Activated CD4-positive, alpha-beta memory T cell treated with anti-CD3 and anti-CD28 coated beads for 36 hours (primary cell): ENCODE measurements at regions of chr5 and their contacts with region 1.

Region 1: DNA sequence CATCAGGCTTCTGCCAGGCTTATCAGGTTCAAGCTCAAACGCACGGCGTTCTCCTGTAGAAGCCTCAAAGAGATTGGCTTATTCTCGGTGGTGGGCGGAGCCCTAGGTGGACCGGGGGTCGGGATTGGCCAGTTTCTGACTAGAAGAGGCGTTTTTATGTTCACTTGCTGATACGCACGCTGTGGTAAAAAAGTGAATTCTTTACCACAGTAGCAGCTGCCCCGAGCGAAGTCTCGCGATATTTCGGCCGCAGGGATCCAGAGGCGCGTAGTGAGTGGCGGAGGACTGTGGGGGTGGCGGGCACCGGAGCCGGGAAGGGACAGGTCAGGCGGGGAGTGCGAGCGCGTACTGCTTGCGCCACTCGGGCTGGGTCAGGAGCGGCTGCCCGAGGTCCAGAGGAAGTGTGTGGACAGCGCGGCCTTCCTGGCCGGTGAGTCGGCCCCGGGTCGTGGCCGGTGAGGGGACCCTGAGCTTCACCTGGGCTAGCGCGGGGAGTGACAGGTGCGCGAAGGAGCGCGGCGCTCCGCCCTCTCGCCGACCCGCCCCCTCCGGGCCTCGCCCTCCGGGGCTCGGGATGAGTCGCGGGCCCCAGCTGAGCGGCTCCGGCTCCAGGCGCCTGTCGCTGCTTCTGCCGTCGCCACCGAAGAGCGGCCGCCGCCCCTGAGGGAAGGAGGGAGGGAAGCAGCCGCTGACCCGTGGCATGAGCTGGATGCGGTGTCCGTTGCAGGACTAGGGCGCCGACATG is at the start of gene DMXL1:
- DNase-seq: peak; percentile 99
- H3K4me3 Mint-ChIP-seq: peak within 1 kb of the TSS; percentile 85
- H3K27ac Mint-ChIP-seq: peak within 1 kb of the TSS; percentile 96
- H3K4me1 Mint-ChIP-seq: peaks cover 40% of the 10 kb centered on the region
- H3K27me3 Mint-ChIP-seq: peaks cover 2% of the 10 kb centered on the region
- total RNA-seq, gene DMXL1: 24.2 to 26.9 TPM

Region 2: DNA sequence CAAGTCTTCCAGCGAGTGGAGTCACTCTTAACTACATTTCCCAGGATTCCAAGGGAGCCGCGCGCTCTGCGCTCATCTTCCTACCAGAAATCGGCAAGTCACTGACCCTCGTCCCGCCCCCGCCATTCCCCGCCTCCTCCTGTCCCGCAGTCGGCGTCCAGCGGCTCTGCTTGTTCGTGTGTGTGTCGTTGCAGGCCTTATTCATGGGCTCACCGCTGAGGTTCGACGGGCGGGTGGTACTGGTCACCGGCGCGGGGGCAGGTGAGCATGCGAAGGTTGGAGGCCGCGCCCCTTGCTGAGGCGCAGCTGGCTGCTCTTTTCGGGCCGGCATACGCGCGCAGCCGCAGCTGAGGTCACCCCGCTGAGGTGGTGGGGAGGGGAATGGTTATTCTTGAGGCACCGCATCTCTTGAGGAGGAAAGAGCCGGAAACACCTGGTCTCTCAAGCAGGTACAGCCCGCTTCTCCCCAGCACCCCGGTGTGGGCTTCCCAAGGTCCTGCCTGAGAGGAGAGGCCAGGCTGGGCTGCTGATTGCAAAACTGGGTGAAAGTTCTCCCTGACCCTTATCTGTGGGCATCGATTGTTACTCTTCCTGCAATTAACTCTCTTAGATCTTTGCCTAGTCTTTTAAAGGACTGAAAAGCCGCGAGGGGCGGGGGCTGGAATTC is 381.5 kb after region 1 on chr5 and contains the start of gene HSD17B4:
- CTCF ChIA-PET with region 1: no interaction called
- POLR2A ChIA-PET with region 1: no interaction called
- intact Hi-C with region 1: loop called (anchors 1 kb)
- DNase-seq: peak; percentile 88
- H3K4me3 Mint-ChIP-seq: peak within 1 kb of the TSS; percentile 92
- H3K27ac Mint-ChIP-seq: peak within 1 kb of the TSS; percentile 79
- H3K4me1 Mint-ChIP-seq: peaks cover 14% of the 10 kb centered on the region
- H3K27me3 Mint-ChIP-seq: no peaks in the 10 kb centered on the region
- total RNA-seq, gene HSD17B4: 83.2 to 117 TPM